Activated CD4-positive, alpha-beta T cell treated with anti-CD3 and anti-CD28 coated beads, Interleukin-2, amount 10 ng/mL, durations not matched to agents 7 days and 5 days (primary cell): ENCODE measurements at regions of chr5 and their contacts with region 1.

Region 1: GRCh38 chr5:141338538-141339306 is at the start of gene PCDHGA2:
- DNase-seq: no peak
- H3K4me3 Mint-ChIP-seq: no peak within 1 kb of the TSS
- H3K27ac Mint-ChIP-seq: no peak within 1 kb of the TSS
- H3K4me1 Mint-ChIP-seq: no peaks in the 10 kb centered on the region
- H3K27me3 Mint-ChIP-seq: peaks cover 43% of the 10 kb centered on the region
- total RNA-seq, gene PCDHGA2: not detected

Region 2: DNA sequence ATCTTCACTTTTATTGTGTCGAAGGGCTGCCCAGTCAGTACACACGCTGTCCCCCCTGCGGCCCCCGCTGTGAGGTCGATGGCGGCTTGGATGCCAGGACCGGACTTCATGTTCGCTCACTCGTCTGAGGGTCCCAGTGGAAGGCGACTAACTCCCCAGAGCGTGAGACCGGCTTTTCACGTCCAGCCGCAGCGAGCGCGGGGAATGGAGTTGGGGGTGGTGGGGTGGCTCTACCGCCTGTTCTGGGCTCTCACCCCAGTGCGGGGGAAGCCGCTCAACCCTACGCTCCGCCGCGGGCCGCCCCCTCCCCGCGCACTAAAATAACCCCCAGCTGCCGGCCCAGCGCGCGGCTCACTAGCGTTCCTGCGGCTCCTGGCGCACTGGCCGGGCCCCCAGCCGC is 35.0 kb before region 1 on chr5 and contains the start of gene SLC25A2:
- CTCF ChIA-PET with region 1: no interaction called
- POLR2A ChIA-PET with region 1: no interaction called
- DNase-seq: no peak
- H3K4me3 Mint-ChIP-seq: no peak within 1 kb of the TSS
- H3K27ac Mint-ChIP-seq: no peak within 1 kb of the TSS
- H3K4me1 Mint-ChIP-seq: no peaks in the 10 kb centered on the region
- H3K27me3 Mint-ChIP-seq: no peaks in the 10 kb centered on the region
- total RNA-seq, gene SLC25A2: 0.42 to 0.52 TPM

Region 3: GRCh38 chr5:141320225-141321169 is 18.2 kb before region 1 on chr5 and contains the start of gene TAF7:
- CTCF ChIA-PET with region 1: interaction called, 40 read pairs
- POLR2A ChIA-PET with region 1: no interaction called
- DNase-seq: peak; percentile 93
- H3K4me3 Mint-ChIP-seq: peak within 1 kb of the TSS; percentile 89
- H3K27ac Mint-ChIP-seq: peak within 1 kb of the TSS; percentile 98
- H3K4me1 Mint-ChIP-seq: peaks cover 30% of the 10 kb centered on the region
- H3K27me3 Mint-ChIP-seq: no peaks in the 10 kb centered on the region
- total RNA-seq, gene TAF7: 62.1 to 63.3 TPM

Region 4: GRCh38 chr5:141534492-141535211 is 195.9 kb after region 1 on chr5:
- CTCF ChIA-PET with region 1: no interaction called
- POLR2A ChIA-PET with region 1: no interaction called
- DNase-seq: no peak
- H3K4me3 Mint-ChIP-seq: no peak overlapping the region
- H3K27ac Mint-ChIP-seq: no peak overlapping the region
- H3K4me1 Mint-ChIP-seq: peaks cover 2% of the 10 kb centered on the region
- H3K27me3 Mint-ChIP-seq: no peaks in the 10 kb centered on the region